Activated CD4-positive, alpha-beta T cell treated with anti-CD3 and anti-CD28 coated beads, Interleukin-2, amount 10 ng/mL, durations not matched to agents 7 days and 5 days (primary cell): ENCODE measurements at regions of chr16 and their contacts with region 1.

Region 1: GRCh38 chr16:24504472-24505345 is 34.7 kb upstream of the RBBP6 start:
- DNase-seq: peak; percentile 72
- H3K4me3 Mint-ChIP-seq: no peak overlapping the region
- H3K27ac Mint-ChIP-seq: no peak overlapping the region
- H3K4me1 Mint-ChIP-seq: peaks cover 3% of the 10 kb centered on the region
- H3K27me3 Mint-ChIP-seq: peaks cover 7% of the 10 kb centered on the region

Region 2: DNA sequence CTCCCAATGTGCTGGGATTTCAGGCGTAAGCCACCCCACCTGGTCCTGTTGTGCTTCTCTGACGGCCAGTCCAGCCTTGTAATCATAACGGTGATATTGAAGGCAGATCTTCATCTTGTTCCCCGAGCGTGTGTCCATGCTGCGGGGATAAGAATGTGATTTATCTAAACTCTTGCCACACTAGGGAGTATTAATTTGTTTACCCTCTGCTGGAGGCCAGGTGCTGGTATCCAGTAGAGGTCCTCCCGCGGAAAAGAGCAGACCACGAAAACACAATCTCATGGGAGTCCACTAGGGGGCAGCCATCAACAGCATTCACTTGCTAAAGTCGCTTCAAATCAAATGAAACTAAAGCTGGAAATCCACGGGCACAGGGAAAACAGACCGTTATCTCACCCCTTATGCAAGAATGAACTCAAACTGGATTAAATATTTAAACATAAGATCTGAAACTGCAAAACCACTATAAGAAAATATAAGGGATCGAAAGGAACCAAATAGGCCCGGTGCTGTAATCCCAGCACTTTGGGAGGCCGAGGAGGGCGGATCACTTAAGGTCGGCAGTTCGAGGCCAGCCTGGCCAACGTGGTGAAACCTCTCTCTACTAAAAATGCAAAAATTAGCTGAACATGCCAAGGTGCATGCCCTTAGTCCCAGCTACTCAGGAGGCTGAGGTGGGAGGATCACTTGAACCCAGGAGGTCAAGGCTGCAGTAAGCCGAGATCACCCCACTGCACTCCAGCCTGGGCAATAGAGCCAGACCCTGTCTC is 12.4 kb after region 1 on chr16:
- CTCF ChIA-PET with region 1: interaction called, 22 read pairs
- POLR2A ChIA-PET with region 1: no interaction called
- DNase-seq: peak; percentile 82
- H3K4me3 Mint-ChIP-seq: peak overlapping the region; percentile 55
- H3K27ac Mint-ChIP-seq: peak overlapping the region; percentile 26
- H3K4me1 Mint-ChIP-seq: peaks cover 12% of the 10 kb centered on the region
- H3K27me3 Mint-ChIP-seq: no peaks in the 10 kb centered on the region